ENCODE measurements at regions of chr13 and their contacts with region 1.

Region 1: DNA sequence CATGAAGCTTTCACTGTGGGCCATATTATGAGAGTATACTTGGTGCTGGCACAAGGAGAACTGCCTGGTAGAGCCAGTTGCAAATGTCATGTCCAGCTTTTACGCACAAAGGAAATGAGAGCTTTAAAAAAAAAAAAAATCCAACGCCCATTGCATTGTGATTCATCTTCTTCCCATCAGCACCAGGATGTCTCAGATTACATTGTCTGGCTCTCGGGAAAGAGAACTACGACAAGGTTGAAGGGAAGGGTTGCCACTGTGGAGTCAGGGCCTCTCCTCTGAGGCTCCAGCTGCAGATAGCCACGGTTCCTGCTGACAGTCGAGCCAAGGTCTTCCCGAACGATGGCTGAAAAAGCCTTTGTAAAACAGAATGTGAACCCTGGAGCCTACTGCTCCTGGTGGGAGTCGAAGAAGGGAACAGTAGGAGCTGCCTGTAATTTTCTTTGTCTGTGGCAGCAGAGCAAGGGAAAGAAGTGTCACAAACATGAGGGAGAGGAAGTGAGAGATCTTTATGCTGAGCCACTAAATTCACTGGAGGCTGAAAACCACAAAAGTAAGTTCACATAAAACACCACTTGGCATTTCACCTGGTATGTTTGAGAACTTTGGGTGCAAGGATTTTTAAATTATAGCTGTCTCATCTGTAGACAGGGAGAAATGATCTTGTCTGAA is 704.7 kb downstream of the DIAPH3 start:
- DNase-seq: no peak
- ATAC-seq: no peak
- H3K4me3 ChIP-seq: no peak overlapping the region
- H3K4me3 Mint-ChIP-seq: no peak overlapping the region
- H3K27ac ChIP-seq: no peak overlapping the region
- H3K27ac Mint-ChIP-seq: no peak overlapping the region
- H3K4me1 ChIP-seq: no peaks in the 10 kb centered on the region
- H3K4me1 Mint-ChIP-seq: peaks cover 0 to 16% (median 16%) of the 10 kb centered on the region in 3 donors
- H3K27me3 ChIP-seq: peaks cover 0 to 3% of the 10 kb centered on the region in 2 experiments
- H3K27me3 Mint-ChIP-seq: peaks cover 5 to 6% of the 10 kb centered on the region in 2 donors

Region 2: GRCh38 chr13:57846600-57847173 is 1612.4 kb before region 1 on chr13:
- CTCF ChIA-PET with region 1: no interaction called
- POLR2A ChIA-PET with region 1: no interaction called
- DNase-seq: no peak
- ATAC-seq: no peak
- H3K4me3 ChIP-seq: no peak overlapping the region
- H3K4me3 Mint-ChIP-seq: no peak overlapping the region
- H3K27ac ChIP-seq: no peak overlapping the region
- H3K27ac Mint-ChIP-seq: no peak overlapping the region
- H3K4me1 ChIP-seq: no peaks in the 10 kb centered on the region
- H3K4me1 Mint-ChIP-seq: no peaks in the 10 kb centered on the region
- H3K27me3 ChIP-seq: no peaks in the 10 kb centered on the region
- H3K27me3 Mint-ChIP-seq: no peaks in the 10 kb centered on the region

Region 3: DNA sequence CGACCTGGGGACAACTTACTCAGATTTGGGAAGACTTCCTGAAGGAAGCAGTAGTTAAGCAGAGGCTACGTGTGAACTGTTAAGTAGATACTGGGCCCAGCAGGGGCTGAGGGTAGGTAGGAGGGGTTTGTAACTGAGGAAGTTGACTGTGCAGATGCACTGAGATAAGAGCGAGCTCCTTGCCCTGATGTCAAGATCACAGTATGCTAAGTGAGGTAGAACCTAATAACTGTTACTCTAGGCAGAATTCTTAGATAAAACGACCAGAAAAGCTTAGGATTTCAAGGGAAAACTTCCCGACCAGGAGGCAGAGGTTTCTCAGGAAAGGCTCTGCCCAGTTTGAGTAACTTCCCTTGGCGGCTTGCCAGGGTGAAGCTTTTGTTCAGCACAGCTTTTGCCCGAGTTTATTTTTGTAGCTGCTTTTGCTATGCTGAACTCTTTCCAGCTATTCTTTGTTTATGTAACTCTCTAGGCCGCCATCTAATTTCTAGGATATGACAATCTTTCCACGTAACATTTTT is 72.6 kb after region 1 on chr13:
- CTCF ChIA-PET with region 1: no interaction called
- POLR2A ChIA-PET with region 1: interaction called in 1 of 2 experiments, 20 read pairs
- DNase-seq: peak in 12 of 35 experiments; percentile 2 to 29 (median 10)
- ATAC-seq: peak; percentile 73 to 92 (median 82)
- H3K4me3 ChIP-seq: no peak overlapping the region
- H3K4me3 Mint-ChIP-seq: peak overlapping the region in 2 of 3 donors; percentile 3 to 57
- H3K27ac ChIP-seq: peak overlapping the region; percentile 13
- H3K27ac Mint-ChIP-seq: peak overlapping the region in 1 of 2 donors; percentile 66
- H3K4me1 ChIP-seq: peaks cover 0 to 5% of the 10 kb centered on the region in 2 experiments
- H3K4me1 Mint-ChIP-seq: peaks cover 8 to 13% (median 12%) of the 10 kb centered on the region in 3 donors
- H3K27me3 ChIP-seq: no peaks in the 10 kb centered on the region
- H3K27me3 Mint-ChIP-seq: no peaks in the 10 kb centered on the region